ENCODE measurements at regions of chr17 and their contacts with region 1.

Region 1: GRCh38 chr17:78421484-78422266 is 43.2 kb downstream of the PGS1 start:
- DNase-seq: peak; percentile 74 to 75
- H3K4me3 ChIP-seq: no peak overlapping the region
- H3K27ac ChIP-seq: no peak overlapping the region
- H3K4me1 ChIP-seq: peaks cover 0 to 25% of the 10 kb centered on the region in 2 donors
- H3K27me3 ChIP-seq: no peaks in the 10 kb centered on the region
- CTCF ChIP-seq: peak; percentile 96 to 99 (median 98)
- POLR2A ChIP-seq: no peak

Region 2: DNA sequence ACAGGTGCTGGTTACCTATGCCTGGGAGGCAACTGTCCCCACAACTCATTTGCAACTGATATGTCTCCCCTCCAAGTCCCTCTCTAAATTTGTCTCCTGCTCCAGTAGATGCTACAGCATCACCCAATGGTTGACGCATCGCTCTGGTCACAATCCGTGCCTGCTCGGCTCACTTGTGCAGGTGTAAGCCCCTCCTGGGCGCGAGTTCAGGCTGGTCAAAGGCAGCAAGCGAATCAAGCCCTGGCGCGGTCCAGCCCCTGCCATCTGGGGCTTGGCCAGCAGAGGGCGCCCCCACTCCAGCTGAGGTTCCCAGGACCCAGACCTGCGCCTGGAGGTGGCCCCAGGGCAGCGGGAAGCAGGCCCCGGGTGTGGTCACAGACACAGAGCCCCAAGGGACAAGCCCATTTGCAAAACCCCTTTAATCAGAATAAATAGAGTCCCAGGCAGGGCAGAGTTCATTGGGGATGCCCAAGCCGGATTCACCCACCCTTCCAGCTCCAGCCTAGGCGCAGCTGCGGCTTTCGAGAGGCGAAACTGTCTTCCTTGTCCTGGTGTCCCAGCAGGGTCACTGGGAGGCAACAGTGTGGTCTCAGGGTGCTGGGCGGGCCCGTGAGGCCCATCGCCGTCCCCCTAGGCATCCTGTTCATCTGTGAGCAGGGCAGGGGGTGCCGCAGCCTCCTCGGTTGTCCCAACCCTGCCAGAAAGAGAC is 309.0 kb before region 1 on chr17:
- intact Hi-C with region 1: loop called (anchors 5 kb)
- DNase-seq: peak; percentile 69
- H3K4me3 ChIP-seq: no peak overlapping the region
- H3K27ac ChIP-seq: no peak overlapping the region
- H3K4me1 ChIP-seq: peaks cover 7 to 24% of the 10 kb centered on the region in 2 donors
- H3K27me3 ChIP-seq: no peaks in the 10 kb centered on the region
- CTCF ChIP-seq: peak; percentile 92 to 99 (median 97)
- POLR2A ChIP-seq: no peak

Region 3: GRCh38 chr17:78250891-78251794 is 170.5 kb before region 1 on chr17:
- intact Hi-C with region 1: loop called (anchors 5 kb)
- DNase-seq: peak; percentile 83 to 88
- H3K4me3 ChIP-seq: no peak overlapping the region
- H3K27ac ChIP-seq: peak overlapping the region in 1 of 3 donors; percentile 39
- H3K4me1 ChIP-seq: peaks cover 0 to 24% of the 10 kb centered on the region in 2 donors
- H3K27me3 ChIP-seq: no peaks in the 10 kb centered on the region
- CTCF ChIP-seq: peak in 5 of 6 experiments; percentile 97 to 100 (median 99)
- POLR2A ChIP-seq: no peak

Region 4: GRCh38 chr17:78289802-78290363 is 131.8 kb before region 1 on chr17:
- intact Hi-C with region 1: loop called (anchors 5 kb)
- DNase-seq: peak; percentile 80 to 83
- H3K4me3 ChIP-seq: no peak overlapping the region
- H3K27ac ChIP-seq: no peak overlapping the region
- H3K4me1 ChIP-seq: no peaks in the 10 kb centered on the region
- H3K27me3 ChIP-seq: no peaks in the 10 kb centered on the region
- CTCF ChIP-seq: peak; percentile 42 to 99 (median 78)
- POLR2A ChIP-seq: no peak

Region 5: GRCh38 chr17:78349891-78350642 is 71.6 kb before region 1 on chr17:
- intact Hi-C with region 1: no loop called
- DNase-seq: no peak
- H3K4me3 ChIP-seq: no peak overlapping the region
- H3K27ac ChIP-seq: no peak overlapping the region
- H3K4me1 ChIP-seq: peaks cover 24 to 64% of the 10 kb centered on the region in 2 donors
- H3K27me3 ChIP-seq: no peaks in the 10 kb centered on the region
- CTCF ChIP-seq: no peak
- POLR2A ChIP-seq: no peak

Region 6: GRCh38 chr17:78360371-78361224 is 61.1 kb before region 1 on chr17:
- intact Hi-C with region 1: loop called (anchors 2 kb)
- DNase-seq: peak; percentile 92 to 95
- H3K4me3 ChIP-seq: peak overlapping the region in 2 of 3 donors; percentile 14 to 53
- H3K27ac ChIP-seq: peak overlapping the region; percentile 76 to 96 (median 77)
- H3K4me1 ChIP-seq: peaks cover 13 to 57% of the 10 kb centered on the region in 2 donors
- H3K27me3 ChIP-seq: no peaks in the 10 kb centered on the region
- CTCF ChIP-seq: peak; percentile 79 to 95 (median 90)
- POLR2A ChIP-seq: no peak

Measured in thyroid gland (tissue), 4 donors.